ENCODE measurements at regions of chr11 and their contacts with region 1.

Region 1: GRCh38 chr11:113532697-113533424 is 57.7 kb upstream of the DRD2 start:
- DNase-seq: no peak
- ATAC-seq: peak; percentile 81
- H3K4me3 ChIP-seq: no peak overlapping the region
- H3K27ac ChIP-seq: no peak overlapping the region
- H3K4me1 ChIP-seq: no peaks in the 10 kb centered on the region
- H3K27me3 ChIP-seq: no peaks in the 10 kb centered on the region
- CTCF ChIP-seq: peak; percentile 81 to 83 (median 83)
- EP300 ChIP-seq: no peak
- POLR2A ChIP-seq: no peak
- RAD21 ChIP-seq: peak; percentile 79

Region 2: DNA sequence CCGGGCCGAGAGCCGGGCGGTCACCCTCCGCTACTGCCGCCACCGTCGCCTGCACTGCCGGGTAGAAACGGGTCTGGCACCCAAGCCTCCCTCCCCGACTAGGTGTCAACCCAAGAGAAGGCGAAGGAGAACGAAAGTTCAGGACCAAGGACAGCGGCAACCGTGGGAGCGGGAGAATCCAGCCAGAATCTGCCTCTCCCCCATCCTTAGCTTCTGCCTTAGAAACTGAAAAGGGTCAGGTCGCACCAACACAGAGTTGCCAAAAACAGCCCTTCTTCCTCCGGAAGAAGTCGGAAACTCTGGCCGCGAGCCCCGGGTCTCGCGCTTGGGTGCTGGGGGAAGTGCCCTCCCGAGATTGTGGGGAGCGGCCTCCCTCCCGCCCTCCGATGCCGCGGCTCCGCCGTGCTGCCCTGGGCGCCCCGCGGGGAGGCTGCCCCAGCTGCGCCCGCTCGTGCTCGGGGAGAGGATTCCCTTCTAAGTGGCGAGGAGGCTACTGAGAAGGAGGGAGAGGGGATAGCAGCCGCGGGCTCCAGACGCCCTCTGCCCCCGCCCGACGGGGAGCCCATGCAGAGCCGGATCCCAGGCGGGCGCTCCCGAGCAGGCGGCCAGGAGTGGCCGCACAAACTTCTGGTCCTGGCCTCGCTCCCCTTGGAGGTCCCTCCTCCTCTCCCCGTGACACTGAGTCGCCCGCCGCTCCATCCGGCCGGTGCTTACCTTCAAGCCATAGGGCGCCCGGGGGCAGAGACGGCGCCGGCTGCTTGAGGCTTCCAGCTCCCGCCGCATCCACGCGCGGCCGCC is 58.3 kb before region 1 on chr11:
- CTCF ChIA-PET with region 1: no interaction called
- POLR2A ChIA-PET with region 1: no interaction called
- RAD21 ChIA-PET with region 1: no interaction called
- SMC1A ChIA-PET with region 1: no interaction called
- in situ Hi-C with region 1: no loop called
- intact Hi-C with region 1: no loop called
- DNase-seq: no peak
- ATAC-seq: peak; percentile 59
- H3K4me3 ChIP-seq: no peak overlapping the region
- H3K27ac ChIP-seq: no peak overlapping the region
- H3K4me1 ChIP-seq: no peaks in the 10 kb centered on the region
- H3K27me3 ChIP-seq: peaks cover 12 to 18% of the 10 kb centered on the region in 2 experiments; a peak in 3 of 4 replicates
- CTCF ChIP-seq: no peak
- EP300 ChIP-seq: no peak
- POLR2A ChIP-seq: no peak
- RAD21 ChIP-seq: no peak

Region 3: DNA sequence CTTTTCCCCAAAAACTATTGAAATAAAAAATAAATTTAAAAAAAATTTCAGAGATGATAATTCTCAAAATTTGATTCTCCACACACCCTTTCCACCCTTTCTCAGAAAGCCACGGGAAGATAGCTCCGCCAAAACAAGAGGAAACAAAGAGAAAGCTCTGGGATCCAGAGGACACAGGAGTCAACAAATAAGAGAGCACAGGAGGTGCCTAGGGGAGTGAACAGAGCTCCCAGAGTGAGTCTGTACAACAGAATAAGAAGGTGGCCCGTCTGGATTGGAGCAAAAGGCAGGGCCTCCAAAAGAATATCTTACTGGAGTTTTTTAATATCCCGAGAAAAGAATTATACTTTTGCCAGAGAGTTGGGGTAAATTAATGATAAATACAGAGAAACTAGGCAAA is 38.7 kb after region 1 on chr11:
- CTCF ChIA-PET with region 1: no interaction called
- POLR2A ChIA-PET with region 1: no interaction called
- RAD21 ChIA-PET with region 1: no interaction called
- SMC1A ChIA-PET with region 1: no interaction called
- in situ Hi-C with region 1: no loop called
- intact Hi-C with region 1: no loop called
- DNase-seq: no peak
- ATAC-seq: no peak
- H3K4me3 ChIP-seq: no peak overlapping the region
- H3K27ac ChIP-seq: no peak overlapping the region
- H3K4me1 ChIP-seq: no peaks in the 10 kb centered on the region
- H3K27me3 ChIP-seq: no peaks in the 10 kb centered on the region; a peak in 1 of 4 replicates
- CTCF ChIP-seq: no peak
- EP300 ChIP-seq: no peak
- POLR2A ChIP-seq: no peak
- RAD21 ChIP-seq: no peak

Region 4: DNA sequence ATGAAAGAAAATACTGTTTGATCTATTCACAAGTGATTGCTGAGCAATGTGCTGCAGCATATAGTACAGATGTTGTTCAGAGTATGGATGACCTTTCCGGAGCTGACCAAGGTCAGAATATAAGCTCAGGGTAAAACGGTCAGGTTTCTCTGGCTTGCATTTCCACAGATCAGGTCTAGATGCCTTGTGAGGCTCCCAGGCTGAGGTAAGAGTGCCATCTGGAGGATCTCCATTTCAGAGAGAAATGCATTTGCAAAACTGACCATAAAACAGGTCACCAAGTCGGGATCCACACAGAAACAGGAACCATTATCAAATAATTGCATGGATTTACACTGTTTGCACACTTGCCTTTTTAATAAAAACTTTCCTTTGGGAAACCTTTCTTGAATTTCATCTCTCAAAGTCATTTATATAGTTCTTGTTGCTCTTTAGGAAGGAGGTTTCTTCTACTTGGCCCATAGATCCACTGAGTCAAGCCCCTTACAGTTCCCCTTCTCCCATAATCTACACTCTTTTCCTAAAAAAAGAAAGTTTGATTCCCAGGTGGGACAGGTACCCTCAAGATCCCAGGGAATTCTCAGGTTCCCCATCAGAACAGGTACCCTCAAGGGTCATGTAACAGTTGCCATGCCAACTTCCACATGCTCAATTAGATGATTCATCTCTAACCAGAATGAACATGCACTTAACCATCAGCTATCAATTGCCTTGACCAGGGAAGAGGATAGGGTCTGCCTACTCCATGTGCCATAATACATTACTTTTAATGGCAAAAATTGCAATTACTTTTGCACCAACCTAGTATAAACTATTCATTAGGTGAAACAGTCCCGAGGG is 198.2 kb after region 1 on chr11:
- CTCF ChIA-PET with region 1: interaction called, 3 read pairs
- POLR2A ChIA-PET with region 1: no interaction called
- RAD21 ChIA-PET with region 1: no interaction called
- SMC1A ChIA-PET with region 1: no interaction called
- in situ Hi-C with region 1: no loop called
- intact Hi-C with region 1: loop called (anchors 5 kb)
- DNase-seq: no peak
- ATAC-seq: peak; percentile 39
- H3K4me3 ChIP-seq: no peak overlapping the region
- H3K27ac ChIP-seq: no peak overlapping the region
- H3K4me1 ChIP-seq: no peaks in the 10 kb centered on the region
- H3K27me3 ChIP-seq: no peaks in the 10 kb centered on the region
- CTCF ChIP-seq: peak in 2 of 3 experiments; percentile 18 to 54; a peak in 3 of 6 replicates
- EP300 ChIP-seq: no peak
- POLR2A ChIP-seq: no peak
- RAD21 ChIP-seq: peak; percentile 58